ENCODE measurements at regions of chr15 and their contacts with region 1.

Region 1: DNA sequence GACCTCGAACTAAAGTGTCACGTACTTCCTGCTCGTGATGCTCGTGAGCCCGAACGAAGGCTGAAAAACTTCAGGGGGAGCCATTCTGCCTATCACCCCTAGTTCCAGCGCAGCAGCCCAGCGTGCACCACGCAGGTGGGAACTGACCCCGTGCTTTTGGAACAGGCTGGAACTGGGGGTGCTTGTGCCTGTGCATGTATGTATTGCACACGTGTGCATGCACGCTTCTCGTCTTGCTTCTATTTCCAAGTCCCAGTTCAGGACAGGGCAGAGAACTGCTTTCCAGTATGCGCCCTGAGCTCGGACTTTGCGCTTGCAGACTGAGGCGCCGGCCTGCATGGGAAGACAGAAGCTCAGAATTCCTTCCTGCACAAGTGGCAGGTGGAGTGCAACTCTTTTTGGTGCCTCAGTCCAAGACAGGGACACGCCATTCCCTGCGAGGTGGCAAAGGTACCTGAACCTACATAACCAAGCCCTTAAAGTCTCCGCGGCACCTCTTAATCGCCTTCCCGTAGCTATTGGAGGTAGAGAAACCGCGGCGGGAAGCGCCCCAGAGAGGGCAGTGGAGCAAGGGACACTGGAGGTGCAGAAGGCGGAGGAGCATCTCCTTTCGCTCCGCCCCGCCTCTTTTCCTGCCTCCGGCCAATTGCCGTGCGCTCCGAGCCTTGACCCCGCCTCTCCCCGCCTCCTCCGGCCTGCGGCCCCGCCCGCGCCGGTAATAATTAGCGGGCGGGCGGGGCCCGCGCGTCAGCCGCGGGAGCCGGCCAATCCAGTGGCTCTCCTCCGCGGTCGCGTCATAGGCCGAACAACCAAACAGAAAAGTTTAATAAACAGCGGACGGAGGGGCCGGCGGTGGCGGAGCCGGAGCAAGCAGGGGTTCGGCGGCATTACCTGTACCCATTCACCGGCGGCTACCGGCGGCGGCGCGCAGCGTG is at the start of gene ZFAND6:
- DNase-seq: peak; percentile 88 to 98 (median 94)
- ATAC-seq: peak; percentile 89
- H3K4me3 ChIP-seq: peak within 1 kb of the TSS; percentile 78
- H3K4me3 Mint-ChIP-seq: peak within 1 kb of the TSS; percentile 98
- H3K27ac ChIP-seq: peak within 1 kb of the TSS; percentile 72 to 82
- H3K27ac Mint-ChIP-seq: peak within 1 kb of the TSS; percentile 95
- H3K4me1 ChIP-seq: peaks cover 13% of the 10 kb centered on the region
- H3K4me1 Mint-ChIP-seq: peaks cover 33% of the 10 kb centered on the region
- H3K27me3 ChIP-seq: no peaks in the 10 kb centered on the region
- H3K27me3 Mint-ChIP-seq: no peaks in the 10 kb centered on the region
- CTCF ChIP-seq: no peak
- total RNA-seq, gene ZFAND6: 65.5 to 69.2 TPM

Region 2: DNA sequence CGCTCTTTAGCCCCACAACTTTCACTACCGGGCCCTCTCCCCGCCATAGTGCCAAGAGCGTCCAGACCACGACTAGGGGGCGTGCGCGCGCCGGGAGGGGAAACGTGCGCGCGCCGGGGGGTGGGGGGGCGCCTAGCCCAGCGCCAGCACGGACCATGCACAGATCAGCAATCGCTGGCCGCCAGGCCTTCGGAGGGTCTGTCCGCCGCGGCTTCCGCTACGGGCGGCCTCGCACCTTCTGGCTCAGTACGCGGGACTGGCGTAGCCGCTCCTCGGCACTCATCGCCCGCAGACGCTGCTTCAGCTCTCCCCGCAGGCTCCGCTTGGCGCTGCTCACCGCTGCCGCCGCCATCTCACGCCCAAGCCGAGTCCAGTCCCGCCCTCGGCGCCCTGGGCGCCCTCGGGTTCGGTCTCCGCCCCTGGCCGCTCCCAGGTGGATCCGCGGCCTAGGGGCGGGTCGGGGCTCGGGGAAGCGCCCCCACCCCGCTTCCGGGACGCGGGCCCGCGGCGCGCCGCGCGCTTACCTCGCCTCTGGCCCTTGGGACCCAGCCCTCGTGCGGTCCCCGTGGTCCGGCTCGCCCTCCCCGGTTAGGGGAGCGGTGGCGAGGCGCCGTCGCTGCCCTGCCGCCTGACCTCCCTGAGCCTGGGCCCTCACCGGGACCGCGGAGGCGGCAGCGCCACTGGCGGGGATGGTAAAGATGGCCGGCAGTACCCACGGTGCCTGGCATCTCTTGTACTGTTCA is 162.3 kb before region 1 on chr15 and contains the start of gene MTHFS:
- CTCF ChIA-PET with region 1: no interaction called
- POLR2A ChIA-PET with region 1: interaction called, 15 read pairs
- intact Hi-C with region 1: loop called in 1 of 2 experiments (anchors 1 kb)
- DNase-seq: peak; percentile 61 to 94 (median 77)
- ATAC-seq: peak; percentile 85
- H3K4me3 ChIP-seq: peak within 1 kb of the TSS; percentile 80
- H3K4me3 Mint-ChIP-seq: peak within 1 kb of the TSS; percentile 97
- H3K27ac ChIP-seq: peak within 1 kb of the TSS; percentile 93 to 95
- H3K27ac Mint-ChIP-seq: peak within 1 kb of the TSS; percentile 97
- H3K4me1 ChIP-seq: peaks cover 16% of the 10 kb centered on the region
- H3K4me1 Mint-ChIP-seq: peaks cover 42% of the 10 kb centered on the region
- H3K27me3 ChIP-seq: no peaks in the 10 kb centered on the region
- H3K27me3 Mint-ChIP-seq: no peaks in the 10 kb centered on the region
- CTCF ChIP-seq: peak; percentile 41
- total RNA-seq, gene MTHFS: 9.1 to 9.8 TPM

Region 3: GRCh38 chr15:79970624-79971434 is 88.3 kb before region 1 on chr15 and contains the start of gene BCL2A1:
- CTCF ChIA-PET with region 1: no interaction called
- POLR2A ChIA-PET with region 1: interaction called, 8 read pairs
- intact Hi-C with region 1: loop called in 1 of 2 experiments (anchors 5 kb)
- DNase-seq: peak in 13 of 14 experiments; percentile 16 to 90 (median 42)
- ATAC-seq: peak; percentile 84
- H3K4me3 ChIP-seq: peak within 1 kb of the TSS; percentile 59
- H3K4me3 Mint-ChIP-seq: peak within 1 kb of the TSS; percentile 84
- H3K27ac ChIP-seq: peak within 1 kb of the TSS; percentile 63 to 72
- H3K27ac Mint-ChIP-seq: peak within 1 kb of the TSS; percentile 91
- H3K4me1 ChIP-seq: peaks cover 26% of the 10 kb centered on the region
- H3K4me1 Mint-ChIP-seq: peaks cover 66% of the 10 kb centered on the region
- H3K27me3 ChIP-seq: no peaks in the 10 kb centered on the region
- H3K27me3 Mint-ChIP-seq: no peaks in the 10 kb centered on the region
- CTCF ChIP-seq: no peak
- total RNA-seq, gene BCL2A1: 18.7 to 20.0 TPM

Region 4: DNA sequence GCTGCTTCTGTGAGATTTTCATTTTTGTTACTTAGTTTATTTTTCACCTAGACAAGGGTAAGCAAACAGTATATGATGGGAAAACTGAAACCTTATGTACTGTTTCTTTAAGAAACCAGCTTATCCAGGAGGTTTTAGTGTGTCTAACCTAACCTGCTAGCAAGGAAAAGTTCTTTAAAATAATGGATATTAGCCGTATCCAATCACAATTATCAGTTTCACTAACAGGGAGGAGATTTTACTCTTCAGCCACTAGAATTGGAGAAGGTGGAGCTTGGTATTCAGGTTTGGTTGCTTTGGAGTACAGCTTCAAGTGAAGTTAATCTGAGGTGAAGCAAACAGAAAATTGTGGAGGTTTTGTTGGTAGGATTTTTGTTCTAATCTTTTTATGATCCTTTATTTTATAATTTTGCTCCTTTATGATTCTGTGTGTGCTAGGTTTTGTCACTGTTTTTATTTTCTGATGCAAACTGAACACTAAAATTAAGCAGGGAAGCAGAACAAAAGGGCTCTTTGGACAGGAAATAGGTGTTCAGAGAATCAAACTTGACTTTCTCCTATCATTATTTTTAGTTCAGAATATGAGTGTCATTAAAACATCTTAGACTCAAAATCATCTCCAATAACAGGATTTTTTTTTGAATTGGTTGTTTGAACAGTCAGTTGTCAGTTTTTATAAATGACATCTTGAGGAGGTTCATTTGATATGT is 13.3 kb after region 1 on chr15:
- CTCF ChIA-PET with region 1: interaction called, 9 read pairs
- POLR2A ChIA-PET with region 1: interaction called, 45 read pairs
- intact Hi-C with region 1: loop called in 1 of 2 experiments (anchors 2 kb)
- DNase-seq: peak in 5 of 14 experiments; percentile 10 to 80 (median 69)
- ATAC-seq: peak; percentile 99
- H3K4me3 ChIP-seq: peak overlapping the region; percentile 31
- H3K4me3 Mint-ChIP-seq: peak overlapping the region; percentile 81
- H3K27ac ChIP-seq: no peak overlapping the region
- H3K27ac Mint-ChIP-seq: peak overlapping the region; percentile 55
- H3K4me1 ChIP-seq: no peaks in the 10 kb centered on the region
- H3K4me1 Mint-ChIP-seq: peaks cover 86% of the 10 kb centered on the region
- H3K27me3 ChIP-seq: no peaks in the 10 kb centered on the region
- H3K27me3 Mint-ChIP-seq: no peaks in the 10 kb centered on the region
- CTCF ChIP-seq: no peak

Region 5: GRCh38 chr15:80152180-80152845 is 93.2 kb after region 1 on chr15:
- CTCF ChIA-PET with region 1: interaction called, 4 read pairs
- POLR2A ChIA-PET with region 1: interaction called, 33 read pairs
- intact Hi-C with region 1: loop called (anchors 1 kb)
- DNase-seq: peak; percentile 79 to 98 (median 86)
- ATAC-seq: peak; percentile 72
- H3K4me3 ChIP-seq: peak overlapping the region; percentile 89
- H3K4me3 Mint-ChIP-seq: peak overlapping the region; percentile 89
- H3K27ac ChIP-seq: peak overlapping the region in 1 of 2 donors; percentile 47
- H3K27ac Mint-ChIP-seq: peak overlapping the region; percentile 74
- H3K4me1 ChIP-seq: peaks cover 21% of the 10 kb centered on the region
- H3K4me1 Mint-ChIP-seq: peaks cover 29% of the 10 kb centered on the region
- H3K27me3 ChIP-seq: no peaks in the 10 kb centered on the region
- H3K27me3 Mint-ChIP-seq: no peaks in the 10 kb centered on the region
- CTCF ChIP-seq: no peak

Region 6: DNA sequence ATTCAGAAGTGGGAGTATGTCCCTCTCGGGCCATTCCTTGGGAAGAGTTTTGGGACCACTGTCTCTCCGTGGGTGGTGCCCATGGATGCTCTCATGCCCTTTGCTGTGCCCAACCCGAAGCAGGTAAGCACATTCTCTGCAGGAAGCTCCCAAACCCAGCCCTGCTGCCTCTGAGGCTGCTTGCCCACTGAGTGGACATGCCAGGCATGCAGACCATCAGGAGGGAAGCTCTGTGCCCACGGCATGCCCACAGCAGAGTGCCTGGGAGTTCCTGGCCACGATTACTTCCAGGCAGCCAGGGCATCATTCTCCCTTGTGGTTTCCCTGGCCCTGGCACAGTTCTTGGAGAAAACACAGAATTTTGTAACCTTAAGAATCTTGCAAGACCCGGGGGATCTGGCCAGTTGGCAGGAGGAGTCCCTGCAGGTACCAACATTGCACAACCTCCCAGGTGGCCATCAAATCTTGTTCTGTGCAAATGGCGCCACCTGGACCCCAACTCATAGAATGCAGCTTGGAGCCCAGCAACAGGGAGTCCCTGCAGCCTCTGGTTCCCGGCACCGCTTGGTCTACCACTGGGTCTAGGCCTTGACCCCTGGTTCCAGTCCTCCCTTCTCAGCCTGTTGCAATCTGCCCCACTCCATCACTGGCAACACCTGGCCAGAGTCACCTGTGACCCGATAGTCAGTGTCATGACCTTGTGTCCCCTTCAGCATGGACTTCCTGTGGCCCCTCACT is 114.1 kb after region 1 on chr15:
- CTCF ChIA-PET with region 1: no interaction called
- POLR2A ChIA-PET with region 1: interaction called, 6 read pairs
- intact Hi-C with region 1: loop called in 1 of 2 experiments (anchors 2 kb)
- DNase-seq: peak; percentile 52 to 78 (median 64)
- ATAC-seq: peak; percentile 77
- H3K4me3 ChIP-seq: no peak overlapping the region
- H3K4me3 Mint-ChIP-seq: no peak overlapping the region
- H3K27ac ChIP-seq: no peak overlapping the region
- H3K27ac Mint-ChIP-seq: no peak overlapping the region
- H3K4me1 ChIP-seq: no peaks in the 10 kb centered on the region
- H3K4me1 Mint-ChIP-seq: no peaks in the 10 kb centered on the region
- H3K27me3 ChIP-seq: no peaks in the 10 kb centered on the region
- H3K27me3 Mint-ChIP-seq: no peaks in the 10 kb centered on the region
- CTCF ChIP-seq: peak; percentile 64

Region 7: DNA sequence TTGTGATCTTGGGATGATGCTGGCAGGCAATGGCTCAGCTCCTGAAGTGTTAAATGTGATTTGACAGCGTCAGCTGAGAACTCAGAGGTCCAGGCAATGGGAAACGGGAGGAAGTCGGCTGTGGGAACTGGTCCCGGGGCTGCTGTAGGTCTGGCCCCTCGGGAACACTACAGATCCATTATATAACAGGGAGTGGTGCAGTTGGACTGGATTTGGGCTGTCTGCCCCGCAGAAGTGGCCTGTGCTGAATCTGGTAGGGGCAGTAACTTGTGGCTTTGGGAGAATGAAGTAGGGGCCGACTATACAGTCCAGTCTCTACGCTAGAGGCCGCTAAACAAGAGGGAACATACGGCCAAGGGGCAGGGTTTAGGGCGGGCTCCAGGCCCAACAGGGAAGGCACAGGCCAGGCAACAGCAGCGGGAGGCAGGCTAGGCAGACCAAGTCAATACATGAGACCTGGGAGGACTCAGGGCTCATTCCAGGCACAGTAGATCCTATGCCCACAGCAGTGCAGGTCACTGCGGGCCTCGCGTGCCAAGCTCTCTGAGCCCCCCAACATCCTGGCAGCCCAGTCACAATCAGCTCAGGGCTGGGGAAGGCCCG is 1117.3 kb after region 1 on chr15:
- CTCF ChIA-PET with region 1: no interaction called
- POLR2A ChIA-PET with region 1: no interaction called
- intact Hi-C with region 1: no loop called
- DNase-seq: no peak
- ATAC-seq: no peak
- H3K4me3 ChIP-seq: no peak overlapping the region
- H3K4me3 Mint-ChIP-seq: no peak overlapping the region
- H3K27ac ChIP-seq: no peak overlapping the region
- H3K27ac Mint-ChIP-seq: no peak overlapping the region
- H3K4me1 ChIP-seq: no peaks in the 10 kb centered on the region
- H3K4me1 Mint-ChIP-seq: no peaks in the 10 kb centered on the region
- H3K27me3 ChIP-seq: peaks cover 0 to 7% of the 10 kb centered on the region in 2 experiments
- H3K27me3 Mint-ChIP-seq: peaks cover 20% of the 10 kb centered on the region
- CTCF ChIP-seq: no peak